CD4-positive, alpha-beta T cell (primary cell): ENCODE measurements at regions of chr2 and their contacts with region 1.

Region 1: GRCh38 chr2:112317303-112318158 is 42.1 kb downstream of the ZC3H6 start:
- DNase-seq: no peak
- ATAC-seq: no peak
- H3K4me3 ChIP-seq: no peak overlapping the region
- H3K4me3 Mint-ChIP-seq: no peak overlapping the region
- H3K27ac ChIP-seq: no peak overlapping the region
- H3K27ac Mint-ChIP-seq: no peak overlapping the region
- H3K4me1 ChIP-seq: no peaks in the 10 kb centered on the region
- H3K4me1 Mint-ChIP-seq: no peaks in the 10 kb centered on the region
- H3K27me3 ChIP-seq: no peaks in the 10 kb centered on the region
- H3K27me3 Mint-ChIP-seq: no peaks in the 10 kb centered on the region
- CTCF ChIP-seq: no peak

Region 2: GRCh38 chr2:112134120-112134519 is 183.4 kb before region 1 on chr2:
- CTCF ChIA-PET with region 1: no interaction called
- POLR2A ChIA-PET with region 1: no interaction called
- intact Hi-C with region 1: loop called in 1 of 2 experiments (anchors 5 kb)
- DNase-seq: peak in 1 of 14 experiments; percentile 11
- ATAC-seq: no peak
- H3K4me3 ChIP-seq: no peak overlapping the region
- H3K4me3 Mint-ChIP-seq: no peak overlapping the region
- H3K27ac ChIP-seq: no peak overlapping the region
- H3K27ac Mint-ChIP-seq: no peak overlapping the region
- H3K4me1 ChIP-seq: peaks cover 15% of the 10 kb centered on the region
- H3K4me1 Mint-ChIP-seq: peaks cover 13% of the 10 kb centered on the region
- H3K27me3 ChIP-seq: peaks cover 8 to 15% of the 10 kb centered on the region in 2 experiments
- H3K27me3 Mint-ChIP-seq: peaks cover 27% of the 10 kb centered on the region
- CTCF ChIP-seq: no peak